Heart left ventricle (tissue), 16 donors: ENCODE measurements at regions of chr4 and their contacts with region 1.

Region 1: DNA sequence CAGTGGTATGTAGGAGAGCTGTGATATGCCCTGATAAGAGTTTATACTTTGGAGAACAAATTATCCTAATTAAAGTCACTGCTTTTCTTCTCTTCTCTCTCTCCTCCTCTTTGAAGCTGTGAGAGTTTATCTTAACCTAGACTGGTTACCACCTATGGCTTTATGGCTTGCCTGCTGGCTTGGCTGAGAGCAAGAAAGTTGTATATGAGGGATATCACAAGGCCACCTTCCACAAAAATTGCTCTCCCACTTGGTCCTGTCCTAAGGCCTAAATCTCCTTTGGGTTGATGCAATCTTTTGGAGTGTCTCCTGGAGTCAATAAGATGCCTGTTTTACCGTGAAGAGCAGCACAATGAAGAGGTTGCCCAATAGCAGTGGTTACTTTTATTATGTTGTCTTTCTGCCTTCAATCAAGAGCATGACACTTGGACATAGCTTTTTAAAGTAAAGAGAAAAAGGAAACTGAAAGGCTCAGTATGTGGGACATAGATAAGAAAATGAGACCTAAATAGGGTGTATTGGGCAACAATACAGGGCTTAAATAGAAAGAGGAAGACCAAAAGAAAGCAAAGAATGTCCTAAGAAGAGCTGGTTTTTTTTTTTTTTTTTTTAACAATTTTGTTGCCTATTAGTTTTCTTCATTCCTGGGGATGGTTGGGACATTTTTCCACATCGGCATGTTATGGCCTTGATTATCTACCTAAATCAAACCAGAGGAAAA is 9.2 kb downstream of the GUCY1A1 start:
- DNase-seq: no peak
- ATAC-seq: peak; percentile 34 to 47 (median 42)
- H3K4me3 ChIP-seq: peak overlapping the region in 7 of 12 donors; percentile 2 to 29 (median 14)
- H3K27ac ChIP-seq: peak overlapping the region; percentile 5 to 96 (median 52)
- H3K4me1 ChIP-seq: peaks cover 0 to 83% (median 32%) of the 10 kb centered on the region in 12 donors
- H3K27me3 ChIP-seq: no peaks in the 10 kb centered on the region
- CTCF ChIP-seq: no peak
- POLR2A ChIP-seq: no peak

Region 2: DNA sequence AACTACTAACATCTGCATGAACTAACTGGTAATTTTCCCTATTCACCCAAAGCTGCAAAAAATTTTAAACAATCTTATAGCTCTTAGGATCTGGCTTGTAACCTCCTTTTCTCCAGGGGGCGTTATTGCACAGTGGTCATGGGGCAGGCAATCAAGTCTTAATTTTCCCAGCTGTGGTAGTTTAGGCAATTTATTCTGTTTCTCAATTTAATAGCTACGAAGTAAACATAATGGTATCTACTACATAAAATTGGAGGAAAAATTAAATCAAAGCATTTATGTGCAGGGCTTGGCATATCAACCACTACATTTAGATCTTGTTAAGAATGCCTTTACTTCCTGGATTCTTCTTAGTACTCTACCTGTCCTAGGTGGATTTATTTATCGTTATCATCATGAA is 146.6 kb before region 1 on chr4:
- intact Hi-C with region 1: loop called in 1 of 10 experiments (anchors 5 kb)
- DNase-seq: no peak
- ATAC-seq: no peak
- H3K4me3 ChIP-seq: no peak overlapping the region
- H3K27ac ChIP-seq: no peak overlapping the region
- H3K4me1 ChIP-seq: peaks cover 0 to 47% (median 13%) of the 10 kb centered on the region in 12 donors
- H3K27me3 ChIP-seq: no peaks in the 10 kb centered on the region
- CTCF ChIP-seq: peak in 5 of 12 donors; percentile 10 to 45 (median 21)
- POLR2A ChIP-seq: no peak

Region 3: DNA sequence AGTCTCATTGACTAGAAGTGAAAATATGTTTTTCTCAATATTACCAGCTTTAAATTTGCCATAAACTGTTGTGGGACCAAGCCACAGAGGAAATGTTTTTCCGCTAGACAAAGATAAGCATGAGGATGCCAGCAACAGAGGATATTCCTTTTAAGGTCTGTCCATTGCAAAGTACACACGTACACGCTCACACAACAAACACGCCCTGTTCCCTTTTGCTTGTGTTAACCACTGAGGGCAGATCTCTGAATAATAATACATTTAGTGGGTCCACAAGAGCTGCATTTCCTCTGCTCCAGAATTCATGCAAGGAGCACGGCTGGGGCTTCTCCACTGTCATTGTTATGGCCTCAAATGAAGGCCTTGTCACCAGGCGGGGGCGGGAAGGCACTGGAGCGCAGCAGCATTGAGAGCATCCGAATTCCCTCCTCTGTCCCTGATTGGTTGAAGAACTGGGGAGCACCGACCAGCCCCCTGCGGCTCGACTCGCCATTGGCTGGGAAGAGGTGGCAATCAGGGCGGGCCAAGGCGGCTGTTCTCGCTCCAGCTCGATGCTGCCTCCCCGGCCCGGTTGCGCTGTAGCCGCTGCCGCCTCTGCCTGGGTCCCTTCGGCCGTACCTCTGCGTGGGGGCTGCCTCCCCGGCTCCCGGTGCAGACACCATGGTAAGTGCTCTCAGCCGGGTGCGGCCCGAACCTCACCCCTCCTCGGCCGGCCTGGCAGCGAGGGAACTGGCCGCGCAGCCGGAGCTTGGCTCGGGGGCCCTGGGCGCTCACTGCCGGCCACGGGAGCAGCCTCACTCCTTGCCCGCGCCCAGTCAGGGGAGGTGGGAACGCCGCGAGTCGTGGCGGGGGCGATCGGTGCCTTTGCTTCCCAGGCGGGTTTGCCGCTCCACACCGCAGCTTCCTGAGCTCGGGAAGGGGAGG is 82.9 kb after region 1 on chr4 and contains the start of gene GUCY1B1:
- intact Hi-C with region 1: loop called in 1 of 10 experiments (anchors 10 kb)
- DNase-seq: peak; percentile 97 to 98 (median 97)
- ATAC-seq: peak; percentile 99
- H3K4me3 ChIP-seq: peak within 1 kb of the TSS; percentile 58 to 90 (median 83)
- H3K27ac ChIP-seq: peak within 1 kb of the TSS; percentile 74 to 95 (median 90)
- H3K4me1 ChIP-seq: peaks cover 0 to 27% (median 5%) of the 10 kb centered on the region in 12 donors
- H3K27me3 ChIP-seq: peaks cover 0 to 6% (median 0%) of the 10 kb centered on the region in 9 donors
- CTCF ChIP-seq: peak; percentile 26 to 76 (median 48)
- POLR2A ChIP-seq: peak in 1 of 2 donors; percentile 67
- total RNA-seq, gene GUCY1B1: 14.6 to 30.7 (median 18.7) TPM

Region 4: GRCh38 chr4:155777971-155778735 is 102.3 kb after region 1 on chr4:
- intact Hi-C with region 1: loop called in 2 of 10 experiments (anchors 10 kb)
- DNase-seq: no peak
- ATAC-seq: peak in 1 of 4 donors; percentile 41
- H3K4me3 ChIP-seq: no peak overlapping the region
- H3K27ac ChIP-seq: peak overlapping the region in 6 of 12 donors; percentile 8 to 58 (median 17)
- H3K4me1 ChIP-seq: peaks cover 0 to 23% (median 6%) of the 10 kb centered on the region in 12 donors
- H3K27me3 ChIP-seq: no peaks in the 10 kb centered on the region
- CTCF ChIP-seq: no peak
- POLR2A ChIP-seq: no peak

Region 5: GRCh38 chr4:155906554-155907247 is 230.8 kb after region 1 on chr4:
- intact Hi-C with region 1: no loop called
- DNase-seq: peak in 3 of 5 donors; percentile 25 to 39 (median 32)
- ATAC-seq: no peak
- H3K4me3 ChIP-seq: no peak overlapping the region
- H3K27ac ChIP-seq: peak overlapping the region in 1 of 12 donors; percentile 61
- H3K4me1 ChIP-seq: peaks cover 0 to 13% (median 0%) of the 10 kb centered on the region in 12 donors
- H3K27me3 ChIP-seq: no peaks in the 10 kb centered on the region
- CTCF ChIP-seq: no peak
- POLR2A ChIP-seq: no peak